CD4-positive, alpha-beta memory T cell (primary cell): ENCODE measurements at regions of chr3 and their contacts with region 1.

Region 1: GRCh38 chr3:32467333-32468070 is 35.1 kb downstream of the CMTM6 start:
- DNase-seq: peak; percentile 65 to 82 (median 75)
- H3K4me3 ChIP-seq: peak overlapping the region in 1 of 2 donors; percentile 58
- H3K4me3 Mint-ChIP-seq: peak overlapping the region in 7 of 8 donors; percentile 22 to 69 (median 45)
- H3K27ac ChIP-seq: peak overlapping the region; percentile 52
- H3K27ac Mint-ChIP-seq: peak overlapping the region; percentile 29 to 81 (median 76)
- H3K4me1 ChIP-seq: peaks cover 40% of the 10 kb centered on the region
- H3K4me1 Mint-ChIP-seq: peaks cover 23 to 64% (median 48%) of the 10 kb centered on the region in 4 donors
- H3K27me3 ChIP-seq: no peaks in the 10 kb centered on the region
- H3K27me3 Mint-ChIP-seq: no peaks in the 10 kb centered on the region

Region 2: DNA sequence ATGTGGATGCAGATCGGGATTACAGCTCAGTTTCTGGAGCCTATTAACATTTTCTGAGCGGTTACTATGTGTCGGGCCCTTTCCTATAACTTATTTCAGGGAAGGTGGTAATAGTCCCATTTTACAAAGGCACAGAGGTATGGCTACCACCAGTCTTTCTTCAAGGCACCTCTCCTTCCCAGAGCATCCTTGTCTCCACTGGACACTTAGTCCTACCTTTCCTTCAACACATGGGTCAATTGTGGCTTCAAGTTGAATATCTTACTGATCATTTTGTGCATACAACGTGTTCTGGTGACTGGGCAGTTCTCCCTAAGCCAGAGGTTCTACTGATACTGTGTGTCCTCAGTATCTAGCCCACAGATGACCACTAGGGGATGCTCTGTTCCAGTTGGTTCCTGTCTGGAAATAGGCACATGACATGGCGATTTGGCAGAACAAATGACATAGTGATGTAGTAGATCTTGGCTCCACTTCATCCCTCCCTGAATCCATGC is 289.8 kb before region 1 on chr3:
- CTCF ChIA-PET with region 1: interaction called, 45 read pairs
- POLR2A ChIA-PET with region 1: no interaction called
- intact Hi-C with region 1: loop called (anchors 1 kb)
- DNase-seq: peak; percentile 24 to 64 (median 44)
- H3K4me3 ChIP-seq: no peak overlapping the region
- H3K4me3 Mint-ChIP-seq: peak overlapping the region in 6 of 8 donors; percentile 54 to 68 (median 58)
- H3K27ac ChIP-seq: no peak overlapping the region
- H3K27ac Mint-ChIP-seq: peak overlapping the region in 4 of 7 donors; percentile 19 to 59 (median 28)
- H3K4me1 ChIP-seq: peaks cover 14% of the 10 kb centered on the region
- H3K4me1 Mint-ChIP-seq: peaks cover 8 to 12% (median 10%) of the 10 kb centered on the region in 4 donors
- H3K27me3 ChIP-seq: no peaks in the 10 kb centered on the region
- H3K27me3 Mint-ChIP-seq: no peaks in the 10 kb centered on the region

Region 3: DNA sequence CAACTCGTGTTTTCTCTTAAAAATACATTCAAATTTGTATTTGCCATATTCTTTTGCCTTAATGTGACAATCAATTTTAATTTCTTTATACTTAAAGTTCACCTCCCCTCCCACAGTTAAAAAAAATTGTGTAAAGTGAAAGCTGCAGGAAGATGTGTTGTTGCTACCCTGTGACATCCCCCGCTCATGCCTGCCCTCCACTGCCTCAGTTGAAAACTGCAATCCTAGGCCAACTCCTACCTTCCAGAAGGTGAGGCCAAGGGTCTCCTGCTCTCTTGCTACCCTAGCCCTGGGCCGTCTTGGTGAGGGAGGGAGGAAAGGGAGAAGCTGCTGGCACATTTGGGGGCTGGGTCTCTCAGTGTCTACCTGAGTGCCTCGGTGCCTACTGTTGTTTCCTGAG is 132.8 kb before region 1 on chr3:
- CTCF ChIA-PET with region 1: interaction called, 10 read pairs
- POLR2A ChIA-PET with region 1: no interaction called
- intact Hi-C with region 1: no loop called
- DNase-seq: peak; percentile 54 to 63 (median 58)
- H3K4me3 ChIP-seq: no peak overlapping the region
- H3K4me3 Mint-ChIP-seq: peak overlapping the region in 7 of 8 donors; percentile 32 to 74 (median 55)
- H3K27ac ChIP-seq: peak overlapping the region; percentile 24
- H3K27ac Mint-ChIP-seq: peak overlapping the region; percentile 7 to 84 (median 75)
- H3K4me1 ChIP-seq: peaks cover 45% of the 10 kb centered on the region
- H3K4me1 Mint-ChIP-seq: peaks cover 39 to 60% (median 52%) of the 10 kb centered on the region in 4 donors
- H3K27me3 ChIP-seq: no peaks in the 10 kb centered on the region
- H3K27me3 Mint-ChIP-seq: no peaks in the 10 kb centered on the region

Region 4: DNA sequence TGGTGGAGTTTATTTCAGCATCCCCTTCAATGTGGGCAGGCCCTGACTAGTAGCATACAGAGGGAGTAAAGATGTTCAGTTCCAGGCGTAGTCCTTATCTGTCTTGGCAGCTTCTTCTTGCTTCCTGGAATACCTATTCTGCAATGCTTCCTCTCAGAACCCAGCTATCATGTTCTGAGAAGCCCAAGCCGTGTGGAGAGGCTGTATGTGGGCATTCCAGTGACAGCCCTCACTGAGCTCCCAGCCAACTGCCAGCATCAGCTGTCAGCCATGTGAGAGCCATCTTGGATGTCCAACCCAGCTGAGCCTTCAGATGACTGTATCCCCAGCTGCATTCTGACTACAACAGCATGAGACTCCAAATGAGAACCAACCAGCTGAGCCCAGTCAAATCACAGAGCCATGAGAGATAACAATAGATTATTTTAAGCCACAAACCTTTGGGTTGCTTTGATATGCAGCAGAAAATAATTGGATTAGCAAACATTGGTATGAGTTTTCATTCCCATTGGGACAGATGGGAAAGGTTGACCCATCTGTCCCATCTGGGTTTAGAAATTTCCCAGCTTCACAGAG is 84.3 kb before region 1 on chr3:
- CTCF ChIA-PET with region 1: interaction called, 221 read pairs
- POLR2A ChIA-PET with region 1: no interaction called
- intact Hi-C with region 1: no loop called
- DNase-seq: no peak
- H3K4me3 ChIP-seq: no peak overlapping the region
- H3K4me3 Mint-ChIP-seq: no peak overlapping the region
- H3K27ac ChIP-seq: no peak overlapping the region
- H3K27ac Mint-ChIP-seq: no peak overlapping the region
- H3K4me1 ChIP-seq: no peaks in the 10 kb centered on the region
- H3K4me1 Mint-ChIP-seq: peaks cover 0 to 4% (median under 1%) of the 10 kb centered on the region in 4 donors
- H3K27me3 ChIP-seq: no peaks in the 10 kb centered on the region
- H3K27me3 Mint-ChIP-seq: peaks cover 0 to 2% of the 10 kb centered on the region in 2 donors

Region 5: GRCh38 chr3:32414520-32415202 is 52.8 kb before region 1 on chr3:
- CTCF ChIA-PET with region 1: interaction called, 66 read pairs
- POLR2A ChIA-PET with region 1: interaction called, 6 read pairs
- intact Hi-C with region 1: no loop called
- DNase-seq: peak; percentile 61 to 70 (median 65)
- H3K4me3 ChIP-seq: no peak overlapping the region
- H3K4me3 Mint-ChIP-seq: peak overlapping the region; percentile 45 to 73 (median 56)
- H3K27ac ChIP-seq: peak overlapping the region; percentile 58
- H3K27ac Mint-ChIP-seq: peak overlapping the region; percentile 88 to 98 (median 97)
- H3K4me1 ChIP-seq: peaks cover 76% of the 10 kb centered on the region
- H3K4me1 Mint-ChIP-seq: peaks cover 48 to 87% (median 64%) of the 10 kb centered on the region in 4 donors
- H3K27me3 ChIP-seq: no peaks in the 10 kb centered on the region
- H3K27me3 Mint-ChIP-seq: no peaks in the 10 kb centered on the region

Region 6: DNA sequence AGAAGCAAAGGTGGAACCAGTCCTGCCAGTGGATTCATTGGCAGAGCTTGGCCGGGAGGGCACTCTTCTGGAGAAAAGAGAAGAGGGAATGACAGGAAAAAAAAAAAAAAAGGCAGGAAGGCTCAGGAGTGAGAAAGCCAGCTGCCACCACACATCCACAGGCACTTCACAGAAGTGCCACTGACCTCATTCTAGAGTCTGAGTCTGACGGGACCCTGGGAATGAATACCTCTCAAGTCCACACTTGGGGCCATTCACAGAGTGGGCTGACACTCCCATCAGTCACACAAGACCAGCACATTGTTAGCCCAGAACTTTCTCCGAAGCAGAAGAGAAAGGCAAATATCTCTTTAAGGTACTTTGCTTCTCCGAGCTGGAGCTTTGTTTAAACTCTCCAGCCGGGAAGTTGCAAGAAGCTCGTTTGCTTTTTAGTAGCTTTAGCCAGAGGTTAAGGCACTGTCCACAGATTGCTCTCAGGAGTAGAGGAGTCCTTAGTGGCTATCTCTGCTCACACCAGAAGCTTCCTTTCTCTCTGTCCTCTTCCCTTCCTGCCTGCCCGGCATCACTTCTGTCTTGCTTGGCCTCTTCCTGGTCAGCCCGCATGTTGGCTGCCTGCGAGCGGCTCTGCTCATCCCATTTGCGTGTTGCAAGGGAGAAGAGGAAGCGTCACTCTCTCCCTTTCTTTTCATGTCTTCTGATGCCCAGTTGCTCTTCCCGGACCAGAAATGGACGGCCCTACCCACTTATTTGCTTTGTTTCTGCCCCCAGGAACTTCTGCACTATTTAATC is 18.6 kb before region 1 on chr3:
- CTCF ChIA-PET with region 1: interaction called, 80 read pairs
- POLR2A ChIA-PET with region 1: no interaction called
- intact Hi-C with region 1: no loop called
- DNase-seq: no peak
- H3K4me3 ChIP-seq: no peak overlapping the region
- H3K4me3 Mint-ChIP-seq: no peak overlapping the region
- H3K27ac ChIP-seq: no peak overlapping the region
- H3K27ac Mint-ChIP-seq: peak overlapping the region in 6 of 7 donors; percentile 12 to 76 (median 62)
- H3K4me1 ChIP-seq: peaks cover 38% of the 10 kb centered on the region
- H3K4me1 Mint-ChIP-seq: peaks cover 34 to 65% (median 47%) of the 10 kb centered on the region in 4 donors
- H3K27me3 ChIP-seq: no peaks in the 10 kb centered on the region
- H3K27me3 Mint-ChIP-seq: no peaks in the 10 kb centered on the region